Activated CD4-positive, alpha-beta memory T cell treated with anti-CD3 and anti-CD28 coated beads, Interleukin-2, amount 10 ng/mL, durations not matched to agents 7 days and 5 days (primary cell): ENCODE measurements at regions of chr7 and their contacts with region 1.

Region 1: DNA sequence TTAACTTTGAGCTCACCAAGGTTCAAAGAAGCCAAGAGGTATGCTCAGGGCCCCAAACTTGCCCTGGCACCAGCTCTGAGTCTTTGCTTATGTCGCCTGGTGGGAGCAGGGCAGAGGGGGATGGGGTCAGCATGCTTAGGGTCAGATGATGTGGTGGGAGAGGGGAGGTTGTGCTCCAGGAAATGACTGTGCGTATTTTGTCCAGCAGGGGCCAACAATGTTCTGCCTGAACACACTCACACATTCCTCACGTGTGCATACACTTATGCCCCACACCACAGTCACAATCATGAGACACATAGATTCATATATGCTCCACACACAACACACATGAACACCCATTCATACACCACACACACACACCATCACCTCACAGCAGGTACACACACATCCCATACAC is 4.4 kb upstream of the RAMP3 start:
- DNase-seq: no peak
- H3K4me3 Mint-ChIP-seq: no peak overlapping the region
- H3K27ac Mint-ChIP-seq: no peak overlapping the region
- H3K4me1 Mint-ChIP-seq: no peaks in the 10 kb centered on the region
- H3K27me3 Mint-ChIP-seq: peaks cover 20% of the 10 kb centered on the region

Region 2: DNA sequence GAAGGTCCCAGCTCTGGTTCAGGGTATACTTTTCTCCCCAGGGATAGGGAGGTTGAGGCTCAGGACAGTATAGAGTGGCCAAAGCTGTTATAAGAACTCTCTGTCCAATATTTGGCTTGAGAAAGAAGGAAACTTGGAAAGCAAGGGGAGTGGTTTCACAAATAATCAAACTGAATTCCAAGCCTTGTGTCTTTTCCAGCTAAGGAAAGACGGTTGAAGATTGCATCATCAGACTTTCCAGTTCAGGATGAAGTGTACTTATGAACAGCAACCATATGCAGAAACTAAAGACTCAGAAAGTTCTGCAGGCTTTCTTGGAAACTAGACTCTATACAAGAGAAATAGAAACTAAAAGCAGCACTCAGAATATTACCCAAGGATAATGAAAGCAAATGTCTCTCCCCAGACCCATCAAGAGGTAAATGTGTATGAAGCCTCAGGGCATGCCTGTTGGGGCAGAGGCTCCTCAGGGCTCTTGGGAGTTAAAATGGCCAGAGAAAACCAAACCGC is 50.8 kb after region 1 on chr7:
- CTCF ChIA-PET with region 1: no interaction called
- POLR2A ChIA-PET with region 1: no interaction called
- DNase-seq: no peak
- H3K4me3 Mint-ChIP-seq: peak overlapping the region; percentile 55
- H3K27ac Mint-ChIP-seq: peak overlapping the region; percentile 74
- H3K4me1 Mint-ChIP-seq: peaks cover 38% of the 10 kb centered on the region
- H3K27me3 Mint-ChIP-seq: peaks cover 9% of the 10 kb centered on the region

Region 3: DNA sequence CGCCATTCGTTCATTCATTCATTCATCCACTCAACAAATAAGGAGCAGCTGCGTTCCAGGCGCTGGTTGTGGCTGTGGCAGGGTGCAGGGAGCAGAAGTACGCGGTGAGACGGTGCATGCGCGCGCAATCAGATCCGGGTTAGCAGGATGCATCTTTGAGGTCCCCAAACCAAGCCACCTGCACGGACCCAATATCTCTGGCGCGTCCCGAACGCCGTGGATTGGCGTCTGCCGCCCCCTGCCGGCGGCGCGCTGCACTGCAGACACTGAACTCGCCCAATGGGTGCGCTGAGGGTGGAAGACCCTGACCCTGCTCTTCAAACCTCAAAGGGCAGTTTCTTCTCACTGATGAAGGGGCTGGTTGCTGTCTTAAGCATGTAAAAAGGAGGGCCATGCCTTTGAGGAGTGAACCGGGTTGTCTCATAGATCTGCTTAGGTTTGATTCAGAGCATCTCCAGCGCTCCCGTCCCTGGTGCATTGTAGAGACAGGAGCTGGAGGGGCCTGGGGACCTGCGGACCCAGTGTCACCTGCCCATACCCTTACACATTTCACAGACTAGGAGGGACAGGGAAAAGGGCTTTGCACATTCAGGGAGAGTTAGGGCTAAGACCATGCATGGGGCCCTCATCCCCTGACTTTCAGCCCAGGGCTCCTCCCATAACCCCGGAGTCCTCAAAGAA is 106.9 kb after region 1 on chr7:
- CTCF ChIA-PET with region 1: interaction called, 46 read pairs
- POLR2A ChIA-PET with region 1: no interaction called
- DNase-seq: peak; percentile 75
- H3K4me3 Mint-ChIP-seq: no peak overlapping the region
- H3K27ac Mint-ChIP-seq: no peak overlapping the region
- H3K4me1 Mint-ChIP-seq: peaks cover 6% of the 10 kb centered on the region
- H3K27me3 Mint-ChIP-seq: peaks cover 14% of the 10 kb centered on the region